ENCODE measurements at regions of chr16 and their contacts with region 1.

Region 1: GRCh38 chr16:48623304-48624016 is 13.5 kb upstream of the N4BP1 start:
- DNase-seq: peak; percentile 49 to 91 (median 80)

Region 2: GRCh38 chr16:47136101-47136820 is 1487.2 kb before region 1 on chr16:
- intact Hi-C with region 1: loop called (anchors 10 kb)
- DNase-seq: no peak

Region 3: DNA sequence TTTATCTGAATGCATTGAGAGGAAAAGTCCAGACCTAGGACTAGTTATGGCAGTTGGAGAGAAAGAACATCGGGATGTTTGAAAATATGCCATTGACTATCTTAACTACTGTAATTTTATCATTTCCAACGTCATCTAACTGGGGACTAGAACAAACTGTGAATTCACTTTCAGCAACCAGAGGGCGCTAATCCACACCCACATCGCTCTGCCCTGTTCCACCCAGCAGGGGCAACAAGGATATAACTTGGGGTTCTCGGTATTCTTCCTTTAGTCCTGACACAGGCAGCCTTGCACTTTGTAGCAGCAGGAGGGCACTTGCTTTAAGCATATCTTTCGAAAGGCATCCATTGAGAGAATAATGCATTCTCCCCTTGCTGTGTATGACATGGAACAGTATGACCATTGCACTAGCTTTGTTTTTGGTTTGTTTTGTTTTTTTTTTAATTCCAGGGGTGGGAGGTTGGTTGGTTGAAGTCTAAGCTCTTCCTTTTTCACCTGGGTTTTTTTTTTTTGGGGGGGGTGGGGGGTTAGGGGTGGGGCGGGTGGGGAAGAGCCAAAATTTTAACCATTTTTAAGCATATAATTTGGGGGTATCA is 269.8 kb before region 1 on chr16:
- intact Hi-C with region 1: loop called (anchors 5 kb)
- DNase-seq: peak in 40 of 42 donors; percentile 29 to 87 (median 63)

Region 4: GRCh38 chr16:48535831-48536613 is 87.4 kb before region 1 on chr16:
- intact Hi-C with region 1: loop called (anchors 10 kb)
- DNase-seq: peak in 12 of 42 donors; percentile 10 to 66 (median 38)